Naive thymus-derived CD4-positive, alpha-beta T cell (primary cell): ENCODE measurements at regions of chr19 and their contacts with region 1.

Region 1: GRCh38 chr19:4471403-4472173 is 509 bp upstream of the HDGFL2 start:
- DNase-seq: peak; percentile 78 to 100 (median 98)
- ATAC-seq: peak; percentile 90
- H3K4me3 ChIP-seq: peak overlapping the region; percentile 71
- H3K4me3 Mint-ChIP-seq: no peak overlapping the region
- H3K27ac ChIP-seq: peak overlapping the region; percentile 77
- H3K27ac Mint-ChIP-seq: no peak overlapping the region
- H3K4me1 ChIP-seq: peaks cover 7 to 12% of the 10 kb centered on the region in 2 donors
- H3K4me1 Mint-ChIP-seq: peaks cover 11 to 25% (median 24%) of the 10 kb centered on the region in 7 donors
- H3K27me3 ChIP-seq: no peaks in the 10 kb centered on the region
- H3K27me3 Mint-ChIP-seq: no peaks in the 10 kb centered on the region

Region 2: GRCh38 chr19:4007021-4007835 is 464.4 kb before region 1 on chr19 and contains the start of gene PIAS4:
- CTCF ChIA-PET with region 1: no interaction called
- POLR2A ChIA-PET with region 1: no interaction called
- intact Hi-C with region 1: loop called in 1 of 2 experiments (anchors 5 kb)
- DNase-seq: peak; percentile 93 to 97 (median 96)
- ATAC-seq: peak; percentile 95
- H3K4me3 ChIP-seq: peak within 1 kb of the TSS; percentile 76
- H3K4me3 Mint-ChIP-seq: peak within 1 kb of the TSS; percentile 82 to 93 (median 88)
- H3K27ac ChIP-seq: peak within 1 kb of the TSS; percentile 75
- H3K27ac Mint-ChIP-seq: peak within 1 kb of the TSS; percentile 31 to 93 (median 85)
- H3K4me1 ChIP-seq: peaks cover 26 to 27% of the 10 kb centered on the region in 2 donors
- H3K4me1 Mint-ChIP-seq: peaks cover 13 to 33% (median 23%) of the 10 kb centered on the region in 7 donors
- H3K27me3 ChIP-seq: no peaks in the 10 kb centered on the region
- H3K27me3 Mint-ChIP-seq: no peaks in the 10 kb centered on the region
- total RNA-seq, gene PIAS4: 23.9 to 40.6 (median 28.8) TPM

Region 3: DNA sequence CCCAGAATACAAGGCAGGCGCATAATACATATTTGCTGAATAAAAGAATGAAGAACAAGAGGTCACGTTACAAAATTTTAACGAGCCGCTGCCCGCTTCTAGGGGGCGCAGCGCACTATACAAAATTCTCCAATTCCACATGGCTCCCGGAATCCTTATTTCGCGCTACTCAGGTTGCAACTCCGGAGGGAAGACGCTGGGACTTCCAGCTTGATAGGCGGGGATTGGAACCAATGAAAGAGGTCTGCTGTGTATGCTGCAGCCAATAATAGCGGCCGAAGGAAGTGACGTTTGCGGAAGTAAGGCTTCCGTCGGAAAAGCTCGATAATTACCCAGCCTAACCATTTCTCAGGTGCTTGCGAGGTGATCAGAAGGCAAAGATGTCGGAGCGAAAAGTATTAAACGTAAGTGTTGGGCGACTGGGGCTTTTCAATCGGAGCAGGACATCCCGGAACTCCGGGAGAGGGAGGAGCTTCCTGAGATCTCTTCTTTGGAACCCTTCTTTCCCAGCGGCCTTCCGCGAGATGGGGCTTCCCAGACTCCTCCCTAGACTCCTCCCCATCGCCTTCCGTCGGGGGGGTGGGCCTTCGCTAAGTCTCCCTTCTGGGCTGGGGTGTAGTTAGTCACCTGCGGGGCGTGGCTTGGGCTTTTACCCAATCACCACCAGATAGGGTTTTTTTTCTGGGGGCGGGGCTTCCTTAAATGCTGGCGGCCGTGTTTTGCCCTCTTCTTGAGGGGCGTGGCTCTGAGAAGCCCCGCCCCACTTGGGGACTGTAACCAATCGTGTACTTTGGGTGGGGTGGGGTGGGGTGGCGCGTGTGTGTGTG is 224.6 kb before region 1 on chr19 and contains the start of gene YJU2:
- CTCF ChIA-PET with region 1: interaction called, 4 read pairs
- POLR2A ChIA-PET with region 1: interaction called, 5 read pairs
- intact Hi-C with region 1: loop called (anchors 1 kb)
- DNase-seq: peak; percentile 92 to 100 (median 99)
- ATAC-seq: peak; percentile 96
- H3K4me3 ChIP-seq: peak within 1 kb of the TSS; percentile 100
- H3K4me3 Mint-ChIP-seq: peak within 1 kb of the TSS; percentile 85 to 98 (median 96)
- H3K27ac ChIP-seq: peak within 1 kb of the TSS; percentile 99
- H3K27ac Mint-ChIP-seq: peak within 1 kb of the TSS; percentile 97 to 100 (median 99)
- H3K4me1 ChIP-seq: peaks cover 12 to 13% of the 10 kb centered on the region in 2 donors
- H3K4me1 Mint-ChIP-seq: peaks cover 10 to 33% (median 24%) of the 10 kb centered on the region in 7 donors
- H3K27me3 ChIP-seq: no peaks in the 10 kb centered on the region
- H3K27me3 Mint-ChIP-seq: peaks cover 0 to 2% (median 0%) of the 10 kb centered on the region in 5 donors
- total RNA-seq, gene YJU2: 28.5 to 42.1 (median 31.9) TPM

Region 4: DNA sequence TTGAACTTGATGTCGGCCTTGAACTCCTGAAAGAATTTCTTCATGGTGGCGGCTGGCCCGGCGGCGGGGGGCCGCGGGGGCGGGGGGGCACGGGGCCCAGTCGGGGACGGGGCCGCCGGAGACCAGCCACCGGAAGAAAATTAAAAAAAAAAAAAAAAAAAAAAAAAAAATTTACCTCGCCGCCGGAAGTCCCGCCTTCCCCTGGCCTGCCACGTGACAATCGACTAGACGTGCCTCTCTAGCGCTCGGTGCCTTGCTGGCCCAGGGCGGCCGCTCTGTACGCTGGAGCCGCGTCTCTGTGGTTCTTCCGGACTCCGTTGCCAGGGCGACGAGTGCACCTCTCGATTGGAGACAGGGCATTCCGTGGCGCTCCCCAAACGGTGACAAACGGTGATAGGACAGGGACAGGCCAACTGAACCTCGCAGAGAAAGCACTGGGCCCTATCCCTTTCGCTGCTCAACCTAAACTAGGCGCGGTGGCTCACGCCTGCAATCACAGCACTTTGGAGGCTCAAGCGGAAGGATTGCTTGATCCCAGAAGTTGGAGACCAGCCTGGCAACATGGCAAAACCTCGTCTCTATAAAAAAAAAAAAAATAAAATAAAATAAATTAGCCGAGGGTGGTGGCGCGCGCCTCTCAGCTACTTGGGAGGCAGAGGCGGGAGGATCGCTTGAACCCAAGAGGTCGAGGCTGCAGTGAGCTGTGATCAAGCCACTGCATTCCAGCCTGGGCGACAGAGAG is 13.8 kb before region 1 on chr19 and contains the start of gene UBXN6:
- CTCF ChIA-PET with region 1: interaction called, 3 read pairs
- POLR2A ChIA-PET with region 1: interaction called, 41 read pairs
- intact Hi-C with region 1: loop called (anchors 1 kb)
- DNase-seq: peak; percentile 92 to 99 (median 96)
- ATAC-seq: peak; percentile 99
- H3K4me3 ChIP-seq: peak within 1 kb of the TSS; percentile 64
- H3K4me3 Mint-ChIP-seq: peak within 1 kb of the TSS; percentile 83 to 98 (median 89)
- H3K27ac ChIP-seq: peak within 1 kb of the TSS; percentile 83
- H3K27ac Mint-ChIP-seq: peak within 1 kb of the TSS; percentile 89 to 97 (median 93)
- H3K4me1 ChIP-seq: peaks cover 10% of the 10 kb centered on the region in 2 donors
- H3K4me1 Mint-ChIP-seq: peaks cover 9 to 25% (median 16%) of the 10 kb centered on the region in 7 donors
- H3K27me3 ChIP-seq: no peaks in the 10 kb centered on the region
- H3K27me3 Mint-ChIP-seq: no peaks in the 10 kb centered on the region
- total RNA-seq, gene UBXN6: 49.2 to 68.6 (median 53.1) TPM

Region 5: GRCh38 chr19:4606921-4607678 is 135.5 kb after region 1 on chr19:
- CTCF ChIA-PET with region 1: no interaction called
- POLR2A ChIA-PET with region 1: no interaction called
- intact Hi-C with region 1: no loop called
- DNase-seq: no peak
- ATAC-seq: no peak
- H3K4me3 ChIP-seq: no peak overlapping the region
- H3K4me3 Mint-ChIP-seq: no peak overlapping the region
- H3K27ac ChIP-seq: no peak overlapping the region
- H3K27ac Mint-ChIP-seq: peak overlapping the region in 1 of 9 donors; percentile 43
- H3K4me1 ChIP-seq: no peaks in the 10 kb centered on the region
- H3K4me1 Mint-ChIP-seq: peaks cover 0 to 6% (median 0%) of the 10 kb centered on the region in 7 donors
- H3K27me3 ChIP-seq: peaks cover 0 to 5% of the 10 kb centered on the region in 2 donors
- H3K27me3 Mint-ChIP-seq: peaks cover 21 to 30% (median 25%) of the 10 kb centered on the region in 5 donors

Region 6: GRCh38 chr19:4647676-4648644 is 176.4 kb after region 1 on chr19:
- CTCF ChIA-PET with region 1: no interaction called
- POLR2A ChIA-PET with region 1: no interaction called
- intact Hi-C with region 1: no loop called
- DNase-seq: no peak
- ATAC-seq: no peak
- H3K4me3 ChIP-seq: no peak overlapping the region
- H3K4me3 Mint-ChIP-seq: no peak overlapping the region
- H3K27ac ChIP-seq: peak overlapping the region; percentile 28
- H3K27ac Mint-ChIP-seq: peak overlapping the region in 3 of 9 donors; percentile 41 to 71 (median 59)
- H3K4me1 ChIP-seq: no peaks in the 10 kb centered on the region
- H3K4me1 Mint-ChIP-seq: peaks cover 0 to 8% (median 0%) of the 10 kb centered on the region in 7 donors
- H3K27me3 ChIP-seq: no peaks in the 10 kb centered on the region
- H3K27me3 Mint-ChIP-seq: no peaks in the 10 kb centered on the region

Region 7: DNA sequence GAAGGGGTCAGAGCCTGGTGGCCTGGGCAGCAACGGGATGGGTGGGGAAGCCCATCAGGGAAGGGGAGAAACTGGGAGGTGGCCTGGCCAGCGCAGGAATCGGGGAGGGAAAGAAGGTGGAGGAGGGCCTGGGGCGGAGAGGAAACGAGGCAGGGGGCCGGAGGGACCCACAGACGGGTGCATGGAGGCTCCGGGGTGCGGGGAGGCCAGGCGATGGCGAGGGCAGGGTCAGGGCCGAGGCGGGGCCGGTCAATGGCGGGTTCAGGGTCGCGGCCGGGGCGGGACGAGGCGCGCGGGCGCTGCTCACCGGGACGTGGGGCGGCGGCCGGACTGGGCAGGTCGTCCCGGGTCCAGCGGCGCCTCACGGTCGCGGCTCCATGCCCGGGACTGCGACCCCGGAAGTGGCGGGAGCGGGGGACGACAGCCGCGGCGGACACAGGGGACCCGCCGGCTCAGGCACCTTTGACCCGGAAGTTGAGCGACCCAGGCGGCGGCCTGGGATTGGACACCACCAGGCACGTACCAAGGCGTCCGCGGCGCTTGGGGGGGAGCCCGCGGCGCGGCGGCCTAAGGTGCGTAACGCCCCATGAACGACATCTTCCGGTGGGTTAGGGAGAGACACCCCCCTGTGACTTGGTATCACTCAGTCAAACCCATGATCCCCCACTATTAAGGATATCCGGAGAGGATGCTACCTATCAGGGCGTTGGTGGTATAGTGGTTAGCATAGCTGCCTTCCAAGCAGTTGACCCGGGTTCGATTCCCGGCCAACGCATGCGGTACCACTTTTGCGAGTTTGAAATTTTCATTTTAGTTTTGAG is 252.0 kb after region 1 on chr19 and contains the start of gene DPP9:
- CTCF ChIA-PET with region 1: no interaction called
- POLR2A ChIA-PET with region 1: interaction called, 4 read pairs
- intact Hi-C with region 1: loop called in 1 of 2 experiments (anchors 5 kb)
- DNase-seq: peak; percentile 84 to 100 (median 99)
- ATAC-seq: peak; percentile 99
- H3K4me3 ChIP-seq: peak within 1 kb of the TSS; percentile 96
- H3K4me3 Mint-ChIP-seq: peak within 1 kb of the TSS; percentile 83 to 99 (median 95)
- H3K27ac ChIP-seq: peak within 1 kb of the TSS; percentile 87
- H3K27ac Mint-ChIP-seq: peak within 1 kb of the TSS; percentile 93 to 100 (median 98)
- H3K4me1 ChIP-seq: peaks cover 19 to 26% of the 10 kb centered on the region in 2 donors
- H3K4me1 Mint-ChIP-seq: peaks cover 21 to 48% (median 37%) of the 10 kb centered on the region in 7 donors
- H3K27me3 ChIP-seq: no peaks in the 10 kb centered on the region
- H3K27me3 Mint-ChIP-seq: peaks cover 0 to 10% (median 5%) of the 10 kb centered on the region in 5 donors
- total RNA-seq, gene DPP9: 71.2 to 90.7 (median 81.4) TPM